ENCODE measurements at regions of chr13 and their contacts with region 1.

Region 1: DNA sequence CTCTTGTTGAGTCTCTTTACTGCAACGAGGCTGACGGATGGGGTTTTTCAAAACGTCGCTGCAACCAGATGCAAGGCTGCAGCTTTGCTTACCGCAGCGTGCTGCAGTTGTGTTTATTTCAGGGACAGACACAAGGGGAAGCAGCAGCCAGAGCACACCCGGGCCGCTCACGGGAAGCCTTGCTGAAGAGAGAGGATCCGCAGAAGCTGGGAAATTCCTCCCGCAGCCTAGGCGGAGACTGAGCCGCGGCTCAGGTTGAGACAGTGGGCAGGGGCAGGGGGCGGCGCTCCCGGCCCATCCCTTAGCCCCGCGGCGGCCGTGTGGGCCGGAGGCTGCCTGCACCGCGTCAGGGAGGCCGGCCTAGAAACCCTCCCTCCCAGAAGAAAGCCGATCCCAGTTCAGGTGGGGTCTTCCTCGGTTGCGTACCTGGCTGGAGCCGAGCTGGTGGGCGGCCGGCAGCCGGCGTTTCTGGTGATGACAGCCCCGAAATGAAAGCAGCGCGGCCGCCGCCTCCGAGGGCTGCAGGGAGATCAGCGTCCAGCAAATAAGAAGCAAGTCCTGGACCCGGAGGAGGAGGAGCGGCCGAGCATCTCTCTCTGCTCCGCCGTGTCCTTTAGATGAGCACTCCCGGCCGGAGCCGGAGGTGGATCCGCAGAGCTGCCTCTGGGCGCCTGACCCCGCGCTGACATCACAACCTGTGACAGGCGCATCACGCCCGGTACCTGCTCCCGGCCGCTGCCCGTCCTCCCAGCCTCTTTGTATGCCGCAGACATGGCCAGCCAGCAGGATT is at the start of gene FRY:
- DNase-seq: peak; percentile 87
- H3K4me3 Mint-ChIP-seq: peak within 1 kb of the TSS; percentile 83
- H3K27ac Mint-ChIP-seq: peak within 1 kb of the TSS; percentile 61
- H3K4me1 Mint-ChIP-seq: peaks cover 37% of the 10 kb centered on the region
- H3K27me3 Mint-ChIP-seq: peaks cover 7% of the 10 kb centered on the region
- total RNA-seq, gene FRY: 1.8 and 2.8 TPM in 2 replicates

Region 2: GRCh38 chr13:31982539-31982938 is 48.7 kb before region 1 on chr13:
- intact Hi-C with region 1: no loop called
- DNase-seq: no peak
- H3K4me3 Mint-ChIP-seq: no peak overlapping the region
- H3K27ac Mint-ChIP-seq: no peak overlapping the region
- H3K4me1 Mint-ChIP-seq: no peaks in the 10 kb centered on the region
- H3K27me3 Mint-ChIP-seq: peaks cover 14% of the 10 kb centered on the region

Region 3: DNA sequence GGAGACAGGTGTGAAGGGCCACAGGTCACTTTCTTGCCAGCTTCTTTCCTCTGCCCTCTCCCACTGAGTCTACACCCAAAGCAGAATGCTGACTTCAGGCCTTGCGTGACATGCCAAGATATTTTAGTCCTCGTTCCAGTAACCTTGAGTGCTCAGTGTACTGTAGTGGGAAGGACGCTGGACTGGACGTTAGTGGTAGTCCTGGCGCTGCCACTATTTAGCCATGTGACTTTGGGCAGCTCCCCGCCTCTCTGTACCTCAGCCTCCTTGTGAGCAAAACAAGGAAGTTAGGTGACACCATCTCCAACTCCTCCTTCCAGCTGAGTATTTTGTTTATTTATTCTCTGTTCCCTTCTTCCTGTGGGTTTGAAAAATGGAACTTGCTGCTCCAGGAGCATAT is 86.5 kb after region 1 on chr13:
- intact Hi-C with region 1: loop called (anchors 10 kb)
- DNase-seq: no peak
- H3K4me3 Mint-ChIP-seq: no peak overlapping the region
- H3K27ac Mint-ChIP-seq: no peak overlapping the region
- H3K4me1 Mint-ChIP-seq: peaks cover 8% of the 10 kb centered on the region
- H3K27me3 Mint-ChIP-seq: no peaks in the 10 kb centered on the region

Region 4: GRCh38 chr13:32538621-32539246 is 507.5 kb after region 1 on chr13 and contains the start of gene N4BP2L2:
- intact Hi-C with region 1: loop called (anchors 5 kb)
- DNase-seq: peak; percentile 97
- H3K4me3 Mint-ChIP-seq: peak within 1 kb of the TSS; percentile 98
- H3K27ac Mint-ChIP-seq: peak within 1 kb of the TSS; percentile 99
- H3K4me1 Mint-ChIP-seq: peaks cover 37% of the 10 kb centered on the region
- H3K27me3 Mint-ChIP-seq: peaks cover 8% of the 10 kb centered on the region
- total RNA-seq, gene N4BP2L2: 87.5 and 88.0 TPM in 2 replicates